ENCODE measurements at regions of chr14 and their contacts with region 1.

Region 1: GRCh38 chr14:65019944-65020566 is 33.4 kb downstream of the FNTB start:
- DNase-seq: no peak
- H3K4me3 ChIP-seq: no peak overlapping the region
- H3K27me3 ChIP-seq: no peaks in the 10 kb centered on the region
- CTCF ChIP-seq: peak; percentile 69

Region 2: GRCh38 chr14:64997108-64997794 is 22.8 kb before region 1 on chr14:
- CTCF ChIA-PET with region 1: interaction called, 28 read pairs
- POLR2A ChIA-PET with region 1: no interaction called
- DNase-seq: no peak
- H3K4me3 ChIP-seq: no peak overlapping the region
- H3K27me3 ChIP-seq: no peaks in the 10 kb centered on the region
- CTCF ChIP-seq: no peak